Adrenal gland (tissue), 19 donors: ENCODE measurements at regions of chr1 and their contacts with region 1.

Region 1: DNA sequence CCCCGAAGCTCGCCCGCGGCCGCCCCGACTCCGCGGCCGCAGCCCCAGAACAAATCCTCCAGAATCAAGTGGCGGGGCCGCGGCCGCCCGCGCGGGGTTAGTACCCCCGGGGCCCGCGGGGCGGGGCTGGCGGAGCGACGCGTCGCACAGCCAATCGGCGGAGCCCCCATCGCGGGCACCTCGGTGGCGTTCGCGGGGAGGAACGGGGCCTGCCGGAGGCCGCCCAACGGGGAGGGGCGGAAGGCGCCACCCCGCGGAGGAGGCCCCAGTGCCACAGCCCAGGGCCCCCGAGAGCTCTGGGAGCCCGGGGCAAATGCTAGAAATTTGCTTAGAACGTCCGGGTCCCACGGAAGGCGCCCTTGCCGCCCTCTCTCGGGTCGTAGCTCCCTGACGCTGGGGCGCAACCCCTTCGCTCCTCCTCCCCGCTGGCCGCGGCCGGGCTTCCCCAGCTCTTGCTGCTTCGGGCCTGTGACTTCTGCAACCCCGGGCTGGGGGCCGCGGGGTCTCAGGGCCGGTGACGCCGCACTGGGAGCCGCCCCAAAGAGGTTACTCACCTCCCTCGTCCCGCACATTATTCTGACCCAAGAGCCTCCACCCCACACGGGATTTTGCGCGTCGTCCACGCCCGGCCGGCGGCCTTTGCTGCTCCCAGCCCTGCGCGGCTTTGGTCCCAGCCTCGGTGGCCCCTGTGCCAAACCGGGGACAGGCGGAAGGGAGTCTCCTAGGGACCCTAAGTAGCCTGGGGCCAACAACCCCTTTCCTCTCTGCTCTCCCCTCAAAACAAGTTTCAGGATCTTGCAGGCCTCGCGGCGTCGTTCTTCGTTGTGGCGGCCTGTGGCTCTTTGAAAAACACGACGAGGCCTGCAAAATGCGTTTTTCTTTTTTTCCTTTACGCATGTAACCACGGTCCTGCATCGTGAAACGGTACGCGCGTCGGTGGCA is at the start of gene RUNX3:
- DNase-seq: peak in 5 of 7 donors; percentile 40 to 57 (median 50)
- H3K4me3 ChIP-seq: peak within 1 kb of the TSS in 1 of 4 donors; percentile 43
- H3K27ac ChIP-seq: peak within 1 kb of the TSS in 3 of 5 donors; percentile 22 to 71 (median 57)
- H3K4me1 ChIP-seq: peaks cover 6 to 19% of the 10 kb centered on the region in 2 donors
- H3K27me3 ChIP-seq: peaks cover 81% of the 10 kb centered on the region
- CTCF ChIP-seq: no peak
- POLR2A ChIP-seq: no peak
- total RNA-seq, gene RUNX3: 0.06 to 7.5 (median 3.3) TPM

Region 2: DNA sequence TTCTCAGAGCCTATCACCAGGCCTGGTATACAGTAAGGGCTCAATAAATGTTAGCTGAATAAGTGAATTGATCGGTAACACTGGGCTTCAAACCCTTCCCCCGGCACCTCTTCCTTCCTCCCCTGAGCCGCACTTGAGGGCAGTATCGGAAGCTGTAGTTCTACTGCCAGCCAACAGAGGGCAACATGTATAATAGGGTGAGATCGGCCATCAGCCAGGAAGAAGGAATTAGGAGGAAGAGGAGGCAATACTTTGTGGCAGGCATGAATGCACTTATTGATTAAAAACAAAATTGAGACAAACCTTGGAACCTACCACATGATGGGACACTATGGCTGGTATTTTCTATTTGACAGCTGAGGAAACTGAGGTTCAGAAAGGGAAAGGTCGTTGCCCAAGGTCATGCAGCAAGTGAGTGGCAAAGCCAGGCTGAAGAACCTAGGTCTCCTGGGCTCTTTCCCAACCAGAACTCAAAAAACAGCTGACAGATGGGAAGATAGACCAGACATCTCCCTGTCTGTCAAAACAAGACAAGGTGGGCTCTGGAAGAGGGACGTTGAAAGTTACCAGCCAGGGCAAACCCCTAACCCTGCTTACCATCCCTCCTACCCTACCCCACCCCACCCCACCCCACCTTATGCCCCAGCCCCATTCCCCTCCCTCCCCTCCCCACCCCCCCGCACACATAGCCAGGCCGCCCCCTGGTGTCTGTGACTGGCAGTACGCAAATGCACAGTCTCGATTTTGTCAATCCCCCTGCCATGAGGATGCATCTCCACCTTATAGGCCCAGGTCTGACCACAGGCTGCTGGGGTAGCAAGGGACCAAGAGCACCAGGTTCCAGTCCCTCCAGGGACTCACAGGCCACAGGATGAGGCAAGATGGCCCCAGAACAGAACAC is 106.9 kb after region 1 on chr1:
- intact Hi-C with region 1: loop called in 1 of 2 experiments (anchors 10 kb)
- DNase-seq: peak in 6 of 7 donors; percentile 31 to 59 (median 40)
- H3K4me3 ChIP-seq: no peak overlapping the region
- H3K27ac ChIP-seq: no peak overlapping the region
- H3K4me1 ChIP-seq: no peaks in the 10 kb centered on the region
- H3K27me3 ChIP-seq: peaks cover 5% of the 10 kb centered on the region
- CTCF ChIP-seq: peak; percentile 38 to 68 (median 60)
- POLR2A ChIP-seq: no peak

Region 3: GRCh38 chr1:25103164-25103795 is 172.8 kb after region 1 on chr1:
- intact Hi-C with region 1: loop called in 1 of 2 experiments (anchors 5 kb)
- DNase-seq: no peak
- H3K4me3 ChIP-seq: no peak overlapping the region
- H3K27ac ChIP-seq: no peak overlapping the region
- H3K4me1 ChIP-seq: no peaks in the 10 kb centered on the region
- H3K27me3 ChIP-seq: peaks cover 6% of the 10 kb centered on the region
- CTCF ChIP-seq: no peak
- POLR2A ChIP-seq: no peak